MCF 10A (cell line): ENCODE measurements at regions of chr2 and their contacts with region 1.

Region 1: DNA sequence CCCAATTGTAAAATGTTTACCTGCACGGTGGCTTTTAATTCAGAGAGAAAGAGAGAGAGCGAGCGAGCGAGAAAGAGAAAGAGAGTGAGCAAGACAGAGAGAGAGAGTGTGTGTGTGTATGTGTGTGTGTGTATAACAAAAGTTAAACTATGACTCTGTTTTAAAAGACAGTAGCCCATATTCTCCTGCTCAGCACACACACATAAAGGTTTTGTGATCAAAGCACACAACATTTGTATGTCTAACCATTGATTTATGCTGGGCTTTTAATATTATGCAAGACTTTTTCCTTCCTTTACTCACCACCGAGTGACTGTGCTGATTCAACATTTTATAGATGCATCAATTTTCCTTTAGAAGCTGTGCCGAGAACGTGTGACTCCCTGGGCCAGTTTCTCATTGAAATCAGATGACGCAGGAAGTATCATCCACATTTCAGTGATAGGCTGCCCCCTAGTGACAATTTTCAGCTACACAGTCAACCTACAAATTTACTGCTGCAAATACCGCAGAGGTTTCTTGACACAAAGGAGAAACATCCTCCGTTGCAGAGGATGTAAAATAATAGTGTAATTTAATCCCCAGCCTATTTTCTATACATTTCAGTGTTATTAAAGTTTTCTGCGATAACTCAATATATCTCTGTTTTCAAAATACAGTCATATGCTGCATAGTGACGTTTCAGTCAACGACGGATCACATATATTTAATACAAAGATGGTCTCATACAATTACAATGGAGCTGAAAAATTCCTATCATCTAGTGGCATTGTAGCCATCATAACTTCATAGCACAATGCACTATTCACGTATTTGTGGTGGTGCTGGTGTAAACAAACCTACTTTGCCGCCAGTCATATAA is 165.9 kb upstream of the TANK start:
- DNase-seq: peak; percentile 87
- H3K4me3 Mint-ChIP-seq: no peak overlapping the region
- H3K27ac Mint-ChIP-seq: no peak overlapping the region
- H3K4me1 Mint-ChIP-seq: peaks cover 9% of the 10 kb centered on the region
- H3K27me3 Mint-ChIP-seq: no peaks in the 10 kb centered on the region
- CTCF ChIP-seq: peak; percentile 76

Region 2: DNA sequence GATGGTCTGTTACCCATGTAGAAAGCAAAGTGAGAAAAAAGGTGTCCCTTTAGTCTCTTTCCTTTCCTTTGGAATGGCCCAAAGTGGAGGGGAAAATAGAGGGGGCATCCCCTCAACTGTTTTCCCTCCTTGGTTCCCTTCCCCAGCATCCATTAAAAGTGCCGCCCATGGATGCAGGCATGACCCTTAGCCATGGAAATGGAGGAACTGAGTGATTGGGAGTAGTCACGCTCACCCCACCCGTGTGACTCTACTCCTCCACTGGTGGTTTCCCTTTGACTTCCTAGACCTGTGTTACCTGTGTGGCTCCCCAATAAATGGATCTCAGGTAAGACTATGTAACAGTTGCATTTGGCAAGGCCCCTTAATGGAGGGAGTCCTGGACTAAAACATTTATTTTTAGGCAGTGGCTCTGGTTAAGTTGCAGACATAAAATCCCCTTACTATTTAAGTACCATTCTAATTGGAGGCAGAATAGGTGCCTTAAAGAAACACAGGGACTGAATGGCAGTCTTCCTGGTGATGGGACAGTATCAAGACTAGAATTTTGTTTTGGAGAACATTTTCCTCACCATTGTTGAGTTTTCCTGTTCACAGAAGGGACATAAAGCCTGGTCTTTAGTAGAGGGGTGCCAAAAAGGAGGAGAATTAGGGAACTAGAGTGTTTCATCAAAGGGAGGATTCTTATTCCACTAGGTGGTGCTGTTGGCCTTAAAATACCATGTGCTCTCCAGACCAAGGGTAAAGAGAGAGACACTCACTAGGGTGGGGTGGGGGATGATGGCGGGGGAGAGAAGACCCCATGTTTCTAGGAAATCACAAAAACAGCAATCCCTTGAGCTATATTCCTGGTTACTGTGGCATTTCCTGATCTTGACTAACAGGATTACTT is 906.3 kb before region 1 on chr2:
- CTCF ChIA-PET with region 1: no interaction called
- POLR2A ChIA-PET with region 1: no interaction called
- intact Hi-C with region 1: loop called (anchors 1 kb)
- DNase-seq: peak; percentile 64
- H3K4me3 Mint-ChIP-seq: no peak overlapping the region
- H3K27ac Mint-ChIP-seq: no peak overlapping the region
- H3K4me1 Mint-ChIP-seq: peaks cover 13% of the 10 kb centered on the region
- H3K27me3 Mint-ChIP-seq: no peaks in the 10 kb centered on the region
- CTCF ChIP-seq: peak; percentile 24

Region 3: GRCh38 chr2:160210599-160211138 is 783.7 kb before region 1 on chr2:
- CTCF ChIA-PET with region 1: no interaction called
- POLR2A ChIA-PET with region 1: no interaction called
- intact Hi-C with region 1: loop called (anchors 1 kb)
- DNase-seq: peak; percentile 90
- H3K4me3 Mint-ChIP-seq: no peak overlapping the region
- H3K27ac Mint-ChIP-seq: peak overlapping the region; percentile 73
- H3K4me1 Mint-ChIP-seq: peaks cover 55% of the 10 kb centered on the region
- H3K27me3 Mint-ChIP-seq: no peaks in the 10 kb centered on the region
- CTCF ChIP-seq: peak; percentile 68

Region 4: DNA sequence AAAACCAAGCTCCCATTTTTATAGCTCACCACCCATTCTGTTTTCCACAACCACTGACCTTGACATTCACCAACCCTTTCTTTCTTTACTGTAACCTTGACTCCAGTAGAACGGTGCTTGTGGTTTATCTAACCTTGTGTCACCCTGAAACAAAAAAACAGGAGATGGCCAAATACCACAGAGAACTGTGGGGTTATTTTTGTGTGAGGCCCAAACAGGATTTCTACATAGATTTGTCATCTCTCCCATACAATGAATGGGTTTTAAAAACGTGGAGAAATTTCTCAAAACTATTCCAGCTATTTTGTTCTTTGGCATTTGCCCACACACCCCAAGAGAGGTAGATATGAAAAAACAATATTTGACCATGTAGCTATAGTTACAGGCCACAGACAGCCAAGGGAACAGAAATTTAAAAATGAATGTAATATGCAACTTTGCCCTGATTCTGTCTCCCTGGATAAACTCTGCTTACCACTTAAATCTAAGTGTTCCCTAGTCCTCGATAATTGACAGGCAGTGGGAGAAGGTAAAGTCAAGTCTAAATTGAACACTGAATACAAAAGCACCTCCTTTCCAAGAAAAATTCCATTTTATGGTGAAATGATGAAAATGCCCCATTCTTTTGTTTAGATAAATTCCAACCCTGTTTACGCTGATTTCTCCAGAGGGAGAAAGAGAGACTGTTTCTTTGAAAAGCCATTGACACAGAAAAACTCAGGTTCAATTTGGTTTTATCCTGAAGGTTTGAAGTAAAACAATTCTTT is 65.3 kb before region 1 on chr2:
- CTCF ChIA-PET with region 1: no interaction called
- POLR2A ChIA-PET with region 1: no interaction called
- intact Hi-C with region 1: no loop called
- DNase-seq: peak; percentile 31
- H3K4me3 Mint-ChIP-seq: no peak overlapping the region
- H3K27ac Mint-ChIP-seq: peak overlapping the region; percentile 10
- H3K4me1 Mint-ChIP-seq: peaks cover 15% of the 10 kb centered on the region
- H3K27me3 Mint-ChIP-seq: no peaks in the 10 kb centered on the region
- CTCF ChIP-seq: no peak

Region 5: DNA sequence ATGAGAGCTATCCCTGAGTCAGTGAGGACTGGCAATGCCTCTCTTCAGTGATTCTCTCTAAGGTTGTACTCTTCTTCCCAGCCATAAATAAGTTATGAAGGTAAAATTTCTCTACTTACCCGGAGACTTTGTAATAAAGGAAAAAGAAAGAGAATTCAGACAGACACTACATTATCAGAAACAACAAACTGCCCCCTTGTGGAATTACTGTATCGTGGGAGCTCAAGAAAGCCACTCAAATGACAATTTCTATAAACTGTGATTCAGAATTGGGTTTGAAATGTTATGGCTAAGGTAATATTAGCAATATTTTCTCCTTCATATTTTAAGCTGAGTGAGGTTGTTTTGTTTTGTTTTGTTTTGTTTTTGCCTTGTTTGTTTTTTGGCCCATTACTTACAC is 10.0 kb after region 1 on chr2:
- CTCF ChIA-PET with region 1: interaction called, 35 read pairs
- POLR2A ChIA-PET with region 1: interaction called, 3 read pairs
- intact Hi-C with region 1: no loop called
- DNase-seq: peak; percentile 28
- H3K4me3 Mint-ChIP-seq: no peak overlapping the region
- H3K27ac Mint-ChIP-seq: no peak overlapping the region
- H3K4me1 Mint-ChIP-seq: no peaks in the 10 kb centered on the region
- H3K27me3 Mint-ChIP-seq: no peaks in the 10 kb centered on the region
- CTCF ChIP-seq: peak; percentile 39